ENCODE measurements at regions of chr9 and their contacts with region 1.

Region 1: GRCh38 chr9:113591001-113591898 is 127.7 kb downstream of the RGS3 start:
- DNase-seq: peak; percentile 83 to 89
- H3K4me3 ChIP-seq: no peak overlapping the region
- H3K27ac ChIP-seq: peak overlapping the region; percentile 68 to 81
- H3K4me1 ChIP-seq: peaks cover 0 to 87% (median 70%) of the 10 kb centered on the region in 4 donors
- H3K27me3 ChIP-seq: no peaks in the 10 kb centered on the region
- CTCF ChIP-seq: peak; percentile 93 to 94

Region 2: DNA sequence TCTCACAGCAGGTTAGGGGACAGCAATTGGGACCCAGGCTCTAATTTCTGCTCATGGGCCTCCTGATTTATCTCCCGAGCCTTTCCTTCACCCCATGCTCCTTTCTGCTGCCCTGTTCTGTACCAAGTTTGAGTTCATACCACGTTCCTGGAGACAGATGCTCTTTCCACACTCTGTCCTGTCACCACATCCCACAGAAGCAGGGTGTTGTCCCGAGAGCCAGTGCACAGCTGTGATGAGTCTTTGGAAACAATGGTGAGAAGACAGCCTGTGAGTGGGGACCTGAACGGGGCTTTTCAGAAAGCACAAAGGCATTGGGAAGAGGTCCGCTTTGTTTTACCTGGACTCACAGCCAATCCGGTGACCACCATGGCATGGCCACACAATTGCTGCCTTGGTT is 268.6 kb before region 1 on chr9:
- intact Hi-C with region 1: no loop called
- DNase-seq: no peak
- H3K4me3 ChIP-seq: no peak overlapping the region
- H3K27ac ChIP-seq: no peak overlapping the region
- H3K4me1 ChIP-seq: no peaks in the 10 kb centered on the region
- H3K27me3 ChIP-seq: no peaks in the 10 kb centered on the region
- CTCF ChIP-seq: no peak

Region 3: GRCh38 chr9:113401027-113401792 is 190.0 kb before region 1 on chr9 and contains the start of gene ALAD:
- intact Hi-C with region 1: loop called (anchors 5 kb)
- DNase-seq: peak; percentile 98 to 100
- H3K4me3 ChIP-seq: peak within 1 kb of the TSS; percentile 66 to 82
- H3K27ac ChIP-seq: peak within 1 kb of the TSS; percentile 72 to 78
- H3K4me1 ChIP-seq: peaks cover 0 to 34% (median 17%) of the 10 kb centered on the region in 4 donors
- H3K27me3 ChIP-seq: no peaks in the 10 kb centered on the region
- CTCF ChIP-seq: peak; percentile 92 to 95

Region 4: DNA sequence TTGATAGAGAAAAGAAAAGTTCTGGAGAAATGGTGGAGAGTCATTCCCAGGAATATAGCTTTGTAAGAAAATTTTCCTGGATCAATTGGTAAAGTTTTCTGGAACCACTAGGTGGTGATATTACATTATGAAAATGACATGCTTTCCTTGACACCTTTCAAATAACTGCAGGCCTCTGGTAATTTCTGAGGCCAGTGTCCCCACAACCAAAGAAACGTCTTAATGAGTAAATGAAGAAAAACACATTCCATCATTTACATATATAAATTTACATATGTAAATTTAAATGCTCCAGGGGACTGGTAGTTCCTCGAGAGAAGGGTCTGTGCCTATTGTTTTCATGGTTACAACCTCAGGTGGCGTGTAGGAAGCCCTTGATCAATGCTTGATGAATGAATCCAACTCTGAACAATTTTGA is 144.9 kb before region 1 on chr9:
- intact Hi-C with region 1: loop called (anchors 2 kb)
- DNase-seq: no peak
- H3K4me3 ChIP-seq: no peak overlapping the region
- H3K27ac ChIP-seq: peak overlapping the region; percentile 5 to 49
- H3K4me1 ChIP-seq: peaks cover 0 to 35% (median 0%) of the 10 kb centered on the region in 4 donors
- H3K27me3 ChIP-seq: no peaks in the 10 kb centered on the region
- CTCF ChIP-seq: peak; percentile 54 to 83

Measured in tibial artery (tissue), 4 donors.